ENCODE measurements at regions of chr13 and their contacts with region 1.

Region 1: DNA sequence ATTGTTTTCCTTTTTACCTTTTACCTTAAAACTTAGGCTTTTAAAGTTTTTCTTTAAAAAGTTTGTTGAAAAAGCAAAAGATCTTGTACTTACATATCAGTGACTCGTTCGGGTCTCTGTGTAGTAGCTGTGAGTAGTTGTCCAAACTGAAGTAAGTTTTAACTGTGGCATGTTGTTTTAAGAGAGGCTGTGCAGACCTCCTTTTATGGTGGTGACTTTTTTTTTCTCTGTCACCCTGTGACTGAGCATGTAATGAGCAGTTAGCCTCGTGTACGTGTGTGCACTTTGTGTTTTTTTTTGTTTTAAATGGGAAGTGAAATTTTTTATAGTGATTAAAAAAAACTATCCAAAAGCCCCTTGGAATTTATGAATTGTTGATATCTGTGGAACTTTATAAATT is at the start of gene GPR183:
- DNase-seq: no peak

Region 2: DNA sequence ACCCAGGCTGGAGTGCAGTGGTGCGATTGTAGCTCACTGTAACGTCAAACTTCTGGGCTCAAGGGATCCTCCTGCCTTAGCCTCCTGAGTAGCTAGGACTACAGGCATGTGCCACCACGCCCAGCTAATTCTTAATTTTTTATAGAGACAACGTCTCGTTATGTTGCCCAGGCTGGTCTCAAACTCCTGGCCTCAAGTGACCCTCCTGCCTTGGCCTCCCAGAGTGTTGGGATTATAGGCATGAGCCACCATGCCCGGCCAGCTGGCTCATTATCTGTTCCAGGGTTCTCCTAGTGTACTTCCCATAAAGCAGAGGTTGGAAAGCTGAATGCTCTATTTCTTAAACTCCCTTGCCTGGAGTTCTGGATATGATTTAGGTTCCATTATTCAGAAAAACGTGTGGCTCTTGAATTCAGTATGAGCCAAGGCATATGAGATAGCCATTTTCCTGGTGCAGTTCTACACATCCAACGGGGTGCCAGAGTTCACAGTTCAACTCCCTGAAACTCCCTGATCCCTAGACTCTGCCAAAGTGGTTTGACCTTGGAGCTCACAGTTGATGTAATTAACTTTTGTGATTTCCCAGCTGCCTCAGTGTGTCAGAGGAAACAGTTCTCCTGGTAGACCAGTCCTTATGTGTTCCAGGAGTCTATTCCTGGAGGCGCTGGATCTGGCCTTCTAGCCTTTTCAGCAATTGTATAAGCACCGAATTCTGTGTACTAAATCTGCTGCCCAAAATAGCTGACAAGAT is 21.6 kb before region 1 on chr13:
- CTCF ChIA-PET with region 1: interaction called, 10 read pairs
- POLR2A ChIA-PET with region 1: no interaction called
- DNase-seq: no peak

Measured in HEK293T (cell line).